Dendritic cell treated with granulocyte-macrophage colony-stimulating factor and Interleukin-4, amounts not matched to agents 40 ng/mL and 50 ng/mL, for 4 days (primary cell): ENCODE measurements at regions of chr12 and their contacts with region 1.

Region 1: DNA sequence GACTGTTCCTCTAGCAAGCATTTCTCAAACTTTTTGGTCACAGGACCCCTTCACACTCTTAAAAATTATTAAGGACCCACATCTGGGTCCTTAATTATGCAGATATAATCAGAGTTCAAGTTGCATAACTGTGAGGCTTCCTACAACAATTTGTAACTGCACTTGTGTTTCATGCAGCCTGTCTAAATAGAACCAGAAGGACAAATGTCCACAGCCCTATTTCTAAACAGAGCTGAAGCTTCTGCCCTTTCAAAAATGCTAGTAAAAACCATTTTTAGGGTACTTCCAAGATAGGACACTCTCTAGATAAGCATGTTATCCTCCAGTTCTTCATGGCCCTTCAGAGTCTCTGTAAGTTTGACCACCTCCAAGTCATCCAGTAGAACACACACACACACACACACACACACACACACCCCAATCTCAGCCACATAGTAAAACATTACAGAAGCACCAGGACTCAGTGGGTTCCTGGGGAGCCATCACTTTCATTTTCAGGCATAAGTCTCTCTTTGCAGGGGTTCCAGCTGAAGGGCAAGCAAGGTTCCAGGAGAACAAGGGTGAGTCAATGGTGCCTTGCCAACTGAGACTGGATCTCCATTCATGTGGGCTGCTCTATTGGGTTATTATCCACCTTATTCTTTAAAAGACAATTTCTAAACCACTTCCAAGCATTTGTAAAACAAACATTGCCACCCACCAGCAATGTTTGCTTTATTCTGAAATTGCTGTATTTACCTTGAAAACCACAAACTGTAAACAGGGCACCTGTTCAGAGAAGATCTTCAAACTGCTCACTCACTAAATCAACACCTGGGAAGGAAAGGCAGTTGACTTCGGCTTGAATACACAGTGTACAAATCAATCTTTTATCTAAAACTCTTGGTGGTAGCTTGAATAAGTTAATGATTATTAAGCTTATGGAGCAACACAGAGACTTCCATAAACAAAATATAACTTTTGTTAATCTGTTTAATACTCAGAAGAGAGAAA is 64.1 kb downstream of the ITPR2 start:
- H3K4me3 Mint-ChIP-seq: no peak overlapping the region
- H3K27ac Mint-ChIP-seq: no peak overlapping the region
- H3K4me1 Mint-ChIP-seq: peaks cover 38% of the 10 kb centered on the region
- H3K27me3 Mint-ChIP-seq: peaks cover 2% of the 10 kb centered on the region

Region 2: DNA sequence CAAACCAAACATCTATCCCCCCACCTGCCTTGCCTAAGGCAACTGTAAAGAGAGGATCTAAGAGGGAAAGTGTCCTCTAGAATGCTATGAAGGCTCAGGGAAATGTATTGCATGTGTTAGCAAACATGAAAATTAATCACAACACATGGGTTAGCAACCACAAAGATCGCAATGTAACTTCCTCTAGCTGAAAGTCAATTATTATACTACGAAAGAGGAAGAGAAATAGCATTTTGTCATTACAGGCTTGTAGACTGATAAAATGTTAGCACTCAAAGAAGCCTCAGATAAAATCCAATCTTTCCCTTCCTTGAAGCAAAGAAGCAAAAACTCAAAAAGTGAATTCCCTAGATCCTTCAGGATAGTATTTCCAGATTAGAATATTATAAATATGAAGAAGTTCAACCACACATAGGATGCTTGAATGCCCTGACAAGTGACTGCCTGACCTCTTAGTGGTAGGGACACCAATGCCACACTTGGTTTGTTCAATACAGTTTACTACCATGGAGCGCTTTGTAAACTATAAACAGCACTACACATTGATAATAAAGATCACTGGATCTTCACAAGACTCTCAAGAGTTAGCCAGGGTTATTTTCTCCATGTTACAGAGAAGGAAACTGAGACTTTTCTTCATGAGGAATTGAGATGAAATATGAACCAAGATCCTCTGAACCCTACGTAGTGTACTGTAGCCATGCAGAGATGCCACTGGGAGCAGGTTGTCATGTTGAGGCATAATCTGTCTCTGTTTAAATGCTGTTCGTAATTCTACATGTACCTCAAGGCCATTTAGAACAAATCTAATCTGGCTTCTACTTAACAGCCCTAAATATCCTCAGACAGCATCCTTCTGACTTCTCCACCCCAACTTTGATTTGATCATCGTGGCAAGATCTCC is 36.6 kb before region 1 on chr12:
- intact Hi-C with region 1: loop called (anchors 5 kb)
- H3K4me3 Mint-ChIP-seq: no peak overlapping the region
- H3K27ac Mint-ChIP-seq: peak overlapping the region; percentile 34
- H3K4me1 Mint-ChIP-seq: peaks cover 58% of the 10 kb centered on the region
- H3K27me3 Mint-ChIP-seq: peaks cover 4% of the 10 kb centered on the region

Region 3: DNA sequence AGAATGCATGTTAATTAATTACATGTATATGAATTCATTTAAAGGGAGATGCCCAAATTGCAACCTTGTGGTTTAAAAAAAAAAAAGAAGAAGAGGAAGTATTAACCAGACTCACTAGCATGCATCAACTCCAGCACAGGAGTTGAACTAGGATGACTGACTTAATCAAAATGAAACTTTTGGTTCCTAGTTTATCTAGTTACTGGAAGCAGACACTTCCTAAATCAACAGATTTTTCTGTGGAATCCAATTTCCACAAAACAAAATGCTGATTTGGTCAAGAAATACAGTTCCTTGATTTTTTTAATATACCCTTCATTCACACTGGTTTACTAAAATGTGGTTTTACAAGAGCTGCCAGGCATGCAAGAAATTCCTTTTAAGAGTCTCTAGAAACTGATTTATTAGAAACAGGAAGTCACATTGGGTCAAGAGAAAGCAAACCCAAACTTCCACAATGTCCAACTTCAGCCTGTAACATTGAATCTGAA is 22.4 kb after region 1 on chr12:
- intact Hi-C with region 1: loop called (anchors 2 kb)
- H3K4me3 Mint-ChIP-seq: no peak overlapping the region
- H3K27ac Mint-ChIP-seq: peak overlapping the region; percentile 60
- H3K4me1 Mint-ChIP-seq: peaks cover 44% of the 10 kb centered on the region
- H3K27me3 Mint-ChIP-seq: no peaks in the 10 kb centered on the region

Region 4: GRCh38 chr12:26997003-26997402 is 228.1 kb after region 1 on chr12:
- intact Hi-C with region 1: no loop called
- H3K4me3 Mint-ChIP-seq: no peak overlapping the region
- H3K27ac Mint-ChIP-seq: peak overlapping the region; percentile 49
- H3K4me1 Mint-ChIP-seq: peaks cover 37% of the 10 kb centered on the region
- H3K27me3 Mint-ChIP-seq: no peaks in the 10 kb centered on the region